ENCODE measurements at regions of chr19 and their contacts with region 1.

Region 1: GRCh38 chr19:50368649-50369570 is 3.5 kb upstream of the NAPSA start:
- DNase-seq: peak; percentile 85 to 89 (median 88)
- ATAC-seq: peak; percentile 91 to 97 (median 93)
- H3K4me3 ChIP-seq: peak overlapping the region; percentile 52 to 87 (median 70)
- H3K27ac ChIP-seq: peak overlapping the region in 11 of 12 donors; percentile 60 to 85 (median 80)
- H3K4me1 ChIP-seq: peaks cover 0 to 14% (median 0%) of the 10 kb centered on the region in 12 donors
- H3K27me3 ChIP-seq: no peaks in the 10 kb centered on the region
- CTCF ChIP-seq: peak; percentile 82 to 97 (median 87)
- POLR2A ChIP-seq: no peak

Region 2: DNA sequence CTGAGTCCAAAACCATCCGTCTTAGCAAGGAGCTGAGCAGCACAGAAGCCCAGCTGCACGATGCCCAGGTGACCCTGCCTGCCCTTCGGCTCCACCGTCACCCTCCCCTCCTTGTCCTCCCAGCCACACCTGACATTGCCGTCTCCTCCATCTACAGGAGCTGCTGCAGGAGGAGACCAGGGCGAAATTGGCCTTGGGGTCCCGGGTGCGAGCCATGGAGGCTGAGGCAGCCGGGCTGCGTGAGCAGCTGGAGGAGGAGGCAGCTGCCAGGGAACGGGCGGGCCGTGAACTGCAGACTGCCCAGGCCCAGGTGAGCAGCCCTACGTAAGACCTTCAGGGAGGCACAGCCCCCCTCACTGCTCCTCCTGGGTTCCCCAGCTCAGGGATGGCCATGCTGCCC is 88.8 kb before region 1 on chr19:
- intact Hi-C with region 1: no loop called
- DNase-seq: no peak
- ATAC-seq: peak in 1 of 4 donors; percentile 34
- H3K4me3 ChIP-seq: no peak overlapping the region
- H3K27ac ChIP-seq: no peak overlapping the region
- H3K4me1 ChIP-seq: no peaks in the 10 kb centered on the region
- H3K27me3 ChIP-seq: no peaks in the 10 kb centered on the region
- CTCF ChIP-seq: no peak
- POLR2A ChIP-seq: no peak

Region 3: DNA sequence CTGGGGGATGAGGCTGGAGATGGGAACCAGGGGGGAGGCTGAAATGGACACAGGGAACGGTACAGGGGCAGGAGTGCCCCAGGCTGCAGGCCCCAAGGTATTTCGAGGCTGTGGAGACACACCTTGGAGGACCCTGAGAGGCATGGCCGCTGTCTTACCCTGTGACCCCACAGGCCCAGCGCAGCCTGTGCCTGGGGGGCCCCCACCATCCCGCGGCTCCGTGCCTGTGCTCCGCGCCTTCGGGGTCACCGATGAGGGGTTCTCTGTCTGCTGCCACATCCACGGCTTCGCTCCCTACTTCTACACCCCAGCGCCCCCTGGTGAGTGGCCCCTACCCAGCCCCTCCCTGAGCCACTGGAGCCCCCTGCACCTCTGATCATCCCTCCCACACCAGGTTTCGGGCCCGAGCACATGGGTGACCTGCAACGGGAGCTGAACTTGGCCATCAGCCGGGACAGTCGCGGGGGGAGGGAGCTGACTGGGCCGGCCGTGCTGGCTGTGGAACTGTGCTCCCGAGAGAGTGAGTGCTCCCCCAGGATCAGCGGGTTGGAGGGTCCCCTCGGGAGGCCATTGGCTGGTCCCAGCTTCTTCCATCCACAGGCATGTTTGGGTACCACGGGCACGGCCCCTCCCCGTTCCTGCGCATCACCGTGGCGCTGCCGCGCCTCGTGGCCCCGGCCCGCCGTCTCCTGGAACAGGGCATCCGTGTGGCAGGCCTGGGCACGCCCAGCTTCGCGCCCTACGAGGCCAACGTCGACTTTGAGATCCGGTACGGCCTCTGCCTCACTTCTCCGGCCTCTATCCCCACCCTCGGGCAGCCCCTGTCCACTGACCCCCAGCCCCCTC is 32.9 kb after region 1 on chr19:
- intact Hi-C with region 1: no loop called
- DNase-seq: peak in 1 of 5 donors; percentile 21
- ATAC-seq: peak in 1 of 4 donors; percentile 10
- H3K4me3 ChIP-seq: no peak overlapping the region
- H3K27ac ChIP-seq: no peak overlapping the region
- H3K4me1 ChIP-seq: no peaks in the 10 kb centered on the region
- H3K27me3 ChIP-seq: no peaks in the 10 kb centered on the region
- CTCF ChIP-seq: no peak
- POLR2A ChIP-seq: no peak

Region 4: GRCh38 chr19:50414864-50415660 is 46.2 kb after region 1 on chr19:
- intact Hi-C with region 1: loop called in 9 of 10 experiments (anchors 1 to 5 kb)
- DNase-seq: peak; percentile 64 to 90 (median 76)
- ATAC-seq: peak; percentile 71 to 87 (median 78)
- H3K4me3 ChIP-seq: no peak overlapping the region
- H3K27ac ChIP-seq: no peak overlapping the region
- H3K4me1 ChIP-seq: peaks cover 0 to 13% (median 0%) of the 10 kb centered on the region in 12 donors
- H3K27me3 ChIP-seq: peaks cover 12 to 32% (median 24%) of the 10 kb centered on the region in 9 donors
- CTCF ChIP-seq: peak; percentile 74 to 92 (median 88)
- POLR2A ChIP-seq: no peak

Region 5: GRCh38 chr19:50461066-50461875 is 92.4 kb after region 1 on chr19:
- intact Hi-C with region 1: loop called in 8 of 10 experiments (anchors 1 to 5 kb)
- DNase-seq: peak in 2 of 5 donors; percentile 38 to 54
- ATAC-seq: peak; percentile 62 to 90 (median 70)
- H3K4me3 ChIP-seq: no peak overlapping the region
- H3K27ac ChIP-seq: no peak overlapping the region
- H3K4me1 ChIP-seq: no peaks in the 10 kb centered on the region
- H3K27me3 ChIP-seq: peaks cover 3 to 50% (median 19%) of the 10 kb centered on the region in 9 donors
- CTCF ChIP-seq: peak; percentile 62 to 84 (median 78)
- POLR2A ChIP-seq: no peak

Region 6: GRCh38 chr19:50476224-50476942 is 107.5 kb after region 1 on chr19 and contains the starts of genes EMC10 and GARIN5A:
- intact Hi-C with region 1: loop called in 2 of 10 experiments (anchors 5 kb)
- DNase-seq: peak; percentile 90 to 96 (median 94)
- ATAC-seq: peak; percentile 84 to 98 (median 95)
- H3K4me3 ChIP-seq: peak within 1 kb of the TSS; percentile 47 to 99 (median 95)
- H3K27ac ChIP-seq: peak within 1 kb of the TSS; percentile 35 to 88 (median 80)
- H3K4me1 ChIP-seq: peaks cover 7 to 26% (median 14%) of the 10 kb centered on the region in 12 donors
- H3K27me3 ChIP-seq: no peaks in the 10 kb centered on the region
- CTCF ChIP-seq: no peak
- POLR2A ChIP-seq: peak in 1 of 2 donors; percentile 74
- total RNA-seq, gene EMC10: 72.8 to 138 (median 91.1) TPM
- total RNA-seq, gene GARIN5A: 0.51 to 6.4 (median 1.6) TPM

Region 7: GRCh38 chr19:50777754-50778303 is 408.9 kb after region 1 on chr19:
- intact Hi-C with region 1: loop called in 5 of 10 experiments (anchors 2 to 5 kb)
- DNase-seq: no peak
- ATAC-seq: no peak
- H3K4me3 ChIP-seq: no peak overlapping the region
- H3K27ac ChIP-seq: no peak overlapping the region
- H3K4me1 ChIP-seq: peaks cover 0 to 3% (median 0%) of the 10 kb centered on the region in 12 donors
- H3K27me3 ChIP-seq: peaks cover 28 to 96% (median 60%) of the 10 kb centered on the region in 9 donors
- CTCF ChIP-seq: no peak
- POLR2A ChIP-seq: no peak

Region 8: DNA sequence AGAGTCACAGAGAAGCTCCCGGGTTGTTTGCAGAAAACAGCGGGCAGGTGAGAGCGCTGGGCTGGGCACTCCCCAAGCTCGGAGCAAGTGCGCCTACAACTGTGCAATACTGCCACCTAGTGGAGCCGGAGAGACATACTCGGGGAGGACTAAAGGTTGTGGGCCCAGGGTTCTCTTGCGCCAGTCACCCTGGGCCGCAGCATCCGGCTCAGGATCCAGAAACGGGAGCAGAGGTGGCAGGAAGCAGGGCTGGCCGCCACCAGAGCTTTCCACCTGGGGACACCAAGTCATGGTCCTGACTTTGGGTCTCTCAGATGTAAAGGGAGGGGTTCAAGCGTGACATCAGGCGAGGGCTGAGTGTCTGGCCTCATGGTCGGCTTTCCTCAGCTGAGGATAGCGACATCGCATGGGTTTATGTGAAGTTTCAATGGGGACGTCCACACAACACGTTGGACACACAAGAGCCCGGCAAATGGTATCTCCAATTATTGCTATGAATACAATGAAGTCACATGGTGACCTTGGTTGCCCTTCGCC is 553.5 kb after region 1 on chr19:
- intact Hi-C with region 1: loop called in 2 of 10 experiments (anchors 10 kb)
- DNase-seq: peak; percentile 61 to 77 (median 68)
- ATAC-seq: peak; percentile 81 to 96 (median 90)
- H3K4me3 ChIP-seq: no peak overlapping the region
- H3K27ac ChIP-seq: no peak overlapping the region
- H3K4me1 ChIP-seq: peaks cover 0 to 4% (median 0%) of the 10 kb centered on the region in 12 donors
- H3K27me3 ChIP-seq: peaks cover 0 to 59% (median 21%) of the 10 kb centered on the region in 9 donors
- CTCF ChIP-seq: peak; percentile 65 to 89 (median 81)
- POLR2A ChIP-seq: no peak

Measured in heart left ventricle (tissue), 16 donors.